ENCODE measurements at regions of chr6 and their contacts with region 1.

Region 1: GRCh38 chr6:73653571-73654424 is at the start of gene SLC17A5:
- DNase-seq: peak; percentile 92
- H3K4me3 Mint-ChIP-seq: peak within 1 kb of the TSS; percentile 92
- H3K27ac Mint-ChIP-seq: peak within 1 kb of the TSS; percentile 94
- H3K4me1 Mint-ChIP-seq: peaks cover 40% of the 10 kb centered on the region
- H3K27me3 Mint-ChIP-seq: no peaks in the 10 kb centered on the region
- total RNA-seq, gene SLC17A5: 8.0 to 9.5 TPM

Region 2: DNA sequence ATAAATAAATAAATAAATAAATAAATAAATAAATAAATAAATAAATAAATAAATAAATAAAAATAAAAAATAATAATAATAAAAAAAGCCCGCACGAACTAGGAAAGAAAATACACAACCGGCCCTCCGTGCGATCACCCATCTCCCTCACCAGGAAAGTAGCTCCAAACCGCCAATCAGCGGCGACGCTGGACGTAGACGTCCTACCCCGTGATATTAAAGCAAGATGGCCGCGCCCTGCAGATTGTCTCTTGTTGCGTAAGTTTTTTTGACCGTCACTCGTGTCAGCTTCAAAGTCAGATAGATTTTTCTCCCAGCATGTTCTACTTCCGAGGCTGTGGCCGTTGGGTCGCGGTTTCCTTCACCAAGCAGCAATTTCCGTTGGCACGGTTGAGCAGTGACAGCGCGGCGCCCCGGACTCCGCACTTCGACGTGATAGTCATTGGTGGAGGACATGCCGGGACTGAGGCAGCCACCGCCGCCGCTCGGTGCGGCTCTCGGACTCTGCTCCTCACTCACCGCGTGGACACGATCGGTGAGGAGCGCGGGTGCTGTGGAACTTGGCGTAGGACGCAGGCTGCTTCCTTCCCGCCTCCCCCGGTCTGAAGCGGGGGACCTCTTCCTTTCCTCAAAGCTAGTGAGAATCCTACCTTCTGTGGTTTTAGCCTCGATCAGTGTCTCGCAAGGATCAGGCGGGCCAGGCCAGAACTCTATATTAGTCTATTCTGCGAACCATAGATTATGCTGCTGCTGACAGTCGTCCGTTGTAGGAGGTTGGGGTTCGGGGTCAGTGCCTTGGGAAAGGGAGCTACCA is 192.1 kb before region 1 on chr6 and contains the start of gene MTO1:
- CTCF ChIA-PET with region 1: interaction called, 20 read pairs
- POLR2A ChIA-PET with region 1: interaction called, 22 read pairs
- DNase-seq: peak; percentile 90
- H3K4me3 Mint-ChIP-seq: peak within 1 kb of the TSS; percentile 88
- H3K27ac Mint-ChIP-seq: peak within 1 kb of the TSS; percentile 96
- H3K4me1 Mint-ChIP-seq: peaks cover 60% of the 10 kb centered on the region
- H3K27me3 Mint-ChIP-seq: no peaks in the 10 kb centered on the region
- total RNA-seq, gene MTO1: 62.1 to 66.4 TPM

Region 3: GRCh38 chr6:73520688-73521350 is 133.0 kb before region 1 on chr6 and contains the start of gene EEF1A1:
- CTCF ChIA-PET with region 1: interaction called, 40 read pairs
- POLR2A ChIA-PET with region 1: interaction called, 148 read pairs
- DNase-seq: peak; percentile 100
- H3K4me3 Mint-ChIP-seq: peak within 1 kb of the TSS; percentile 89
- H3K27ac Mint-ChIP-seq: peak within 1 kb of the TSS; percentile 97
- H3K4me1 Mint-ChIP-seq: peaks cover 48% of the 10 kb centered on the region
- H3K27me3 Mint-ChIP-seq: no peaks in the 10 kb centered on the region
- total RNA-seq, gene EEF1A1: 7,440 to 7,455 TPM

Region 4: DNA sequence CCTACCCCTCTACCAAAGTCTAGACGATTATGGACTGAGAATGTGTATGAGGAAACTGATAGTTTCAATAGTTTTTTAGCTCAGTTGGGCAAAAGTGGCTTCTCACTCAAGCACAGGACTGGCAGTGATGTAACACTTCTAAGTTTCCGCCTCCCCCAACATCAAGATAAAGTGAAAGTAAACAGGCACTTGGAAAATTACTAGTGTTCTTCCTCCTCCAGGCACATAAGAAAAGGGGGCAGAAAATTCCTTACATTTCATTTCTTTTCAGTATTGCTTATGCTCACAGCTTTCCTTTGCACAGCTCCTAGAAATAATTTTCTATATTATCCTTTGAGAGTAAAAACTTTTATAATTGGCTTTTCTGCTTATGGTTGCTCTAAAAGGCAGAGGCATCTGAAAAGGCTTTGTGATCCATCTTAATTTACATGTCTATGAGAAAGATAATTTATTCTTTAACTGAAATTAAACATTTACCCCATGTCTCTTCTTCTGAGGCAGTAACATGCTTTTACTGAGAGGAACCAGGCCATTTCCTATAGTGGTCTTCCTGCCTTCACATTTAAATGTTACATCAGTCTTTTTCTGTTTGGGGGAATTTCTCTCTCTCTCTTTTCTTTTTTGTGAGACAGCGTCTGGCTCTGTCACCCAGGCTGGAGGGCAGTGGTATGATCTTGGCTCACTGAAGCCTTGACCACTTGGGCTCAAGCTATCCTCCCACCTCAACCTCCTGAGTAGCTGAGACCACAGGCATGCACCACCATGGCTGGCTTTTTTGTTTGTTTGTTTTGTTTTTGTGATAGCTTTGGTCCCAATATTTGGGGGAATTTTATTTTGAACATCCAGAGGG is 68.0 kb before region 1 on chr6:
- CTCF ChIA-PET with region 1: interaction called, 6 read pairs
- POLR2A ChIA-PET with region 1: interaction called, 15 read pairs
- DNase-seq: peak; percentile 34
- H3K4me3 Mint-ChIP-seq: peak overlapping the region; percentile 70
- H3K27ac Mint-ChIP-seq: peak overlapping the region; percentile 93
- H3K4me1 Mint-ChIP-seq: peaks cover 27% of the 10 kb centered on the region
- H3K27me3 Mint-ChIP-seq: no peaks in the 10 kb centered on the region

Region 5: DNA sequence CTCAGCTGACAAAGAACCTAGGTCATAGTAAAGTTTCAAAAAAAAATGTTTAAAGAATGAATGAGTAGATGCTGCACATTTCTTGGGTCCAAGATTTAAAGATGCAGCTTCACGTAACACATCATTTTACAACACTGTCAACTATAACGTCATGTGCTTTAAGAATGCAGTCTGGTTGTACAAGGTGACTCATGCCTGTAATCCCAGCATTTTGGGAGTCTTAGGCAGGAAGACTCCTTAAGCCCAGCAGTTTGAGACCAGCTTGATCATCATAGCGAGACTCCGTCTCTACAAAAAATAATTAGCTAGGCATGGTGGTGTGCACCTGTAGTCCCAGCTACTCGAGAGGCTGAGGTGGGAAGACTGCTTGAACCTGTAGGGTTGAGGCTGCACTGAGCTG is 21.9 kb before region 1 on chr6:
- CTCF ChIA-PET with region 1: interaction called, 11 read pairs
- POLR2A ChIA-PET with region 1: no interaction called
- DNase-seq: no peak
- H3K4me3 Mint-ChIP-seq: no peak overlapping the region
- H3K27ac Mint-ChIP-seq: no peak overlapping the region
- H3K4me1 Mint-ChIP-seq: no peaks in the 10 kb centered on the region
- H3K27me3 Mint-ChIP-seq: no peaks in the 10 kb centered on the region

Region 6: DNA sequence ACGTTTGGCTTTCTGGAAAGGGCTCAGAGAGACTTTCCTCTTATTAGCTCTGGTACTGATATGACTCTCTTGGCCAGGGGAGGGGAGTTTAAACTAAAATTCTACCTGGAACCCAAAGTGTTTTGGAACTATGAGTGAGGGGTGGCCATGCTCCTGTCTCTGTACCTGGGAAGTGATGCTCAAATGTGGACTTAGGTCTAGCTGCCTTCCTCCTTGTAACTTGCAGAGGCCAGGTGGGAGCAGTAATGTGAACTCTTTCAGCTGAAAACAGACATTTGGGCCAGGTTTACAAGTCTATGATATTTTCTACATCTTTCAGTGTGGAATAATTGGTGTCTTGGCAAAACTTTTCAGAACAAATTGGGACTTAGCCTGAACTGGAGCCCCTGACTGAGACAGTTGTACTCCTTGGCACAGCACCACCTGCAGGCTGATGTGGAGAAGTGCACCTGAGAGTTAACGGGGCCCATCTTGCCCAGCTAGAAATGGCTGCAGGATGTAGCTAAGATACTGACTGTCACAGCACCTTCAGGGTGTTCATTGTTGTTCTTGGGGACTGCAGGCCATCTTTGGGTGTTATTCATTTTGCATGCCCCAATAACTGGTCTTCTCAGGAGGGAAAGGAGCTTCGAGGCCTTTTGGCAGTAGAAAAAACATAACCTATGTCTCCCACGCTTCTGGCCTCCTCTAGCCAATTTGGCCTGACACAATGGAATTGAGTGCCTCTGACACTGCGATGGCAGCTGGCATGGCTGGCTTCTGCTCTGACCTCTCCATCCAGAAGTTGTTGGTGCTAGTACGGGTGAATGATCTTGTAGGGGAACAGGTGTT is 79.3 kb after region 1 on chr6:
- CTCF ChIA-PET with region 1: interaction called, 12 read pairs
- POLR2A ChIA-PET with region 1: interaction called, 4 read pairs
- DNase-seq: peak; percentile 78
- H3K4me3 Mint-ChIP-seq: no peak overlapping the region
- H3K27ac Mint-ChIP-seq: no peak overlapping the region
- H3K4me1 Mint-ChIP-seq: peaks cover 9% of the 10 kb centered on the region
- H3K27me3 Mint-ChIP-seq: no peaks in the 10 kb centered on the region

Measured in activated CD4-positive, alpha-beta memory T cell treated with anti-CD3 and anti-CD28 coated beads, Interleukin-2, amount 10 ng/mL, durations not matched to agents 7 days and 5 days (primary cell).